ENCODE measurements at regions of chr9 and their contacts with region 1.

Region 1: DNA sequence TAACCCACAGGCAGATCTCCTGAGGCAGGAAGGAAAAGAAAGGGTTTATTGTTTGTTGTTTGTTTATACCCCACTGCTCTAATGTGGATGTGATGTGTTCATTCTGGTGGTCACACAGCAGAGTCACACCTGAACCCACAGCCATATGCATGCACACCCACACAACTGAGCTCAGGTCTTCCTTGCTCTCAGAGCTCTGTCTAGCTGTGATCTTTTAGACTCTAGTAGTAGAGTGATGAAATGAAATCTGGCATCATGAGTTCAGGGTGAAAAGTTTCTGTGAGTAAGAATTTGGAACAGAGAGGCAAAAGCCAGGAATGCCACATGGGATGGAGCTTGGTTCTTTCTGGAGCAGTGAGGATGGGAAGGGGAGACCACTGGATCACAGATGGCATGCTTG is 227.0 kb downstream of the PAPPA start:
- DNase-seq: no peak
- ATAC-seq: peak; percentile 41; the same call in 1 of the 3 replicates
- H3K4me3 ChIP-seq: no peak overlapping the region
- H3K27ac ChIP-seq: no peak overlapping the region
- H3K4me1 ChIP-seq: no peaks in the 10 kb centered on the region
- H3K27me3 ChIP-seq: no peaks in the 10 kb centered on the region
- CTCF ChIP-seq: no peak
- EP300 ChIP-seq: no peak
- POLR2A ChIP-seq: no peak
- RAD21 ChIP-seq: no peak

Region 2: DNA sequence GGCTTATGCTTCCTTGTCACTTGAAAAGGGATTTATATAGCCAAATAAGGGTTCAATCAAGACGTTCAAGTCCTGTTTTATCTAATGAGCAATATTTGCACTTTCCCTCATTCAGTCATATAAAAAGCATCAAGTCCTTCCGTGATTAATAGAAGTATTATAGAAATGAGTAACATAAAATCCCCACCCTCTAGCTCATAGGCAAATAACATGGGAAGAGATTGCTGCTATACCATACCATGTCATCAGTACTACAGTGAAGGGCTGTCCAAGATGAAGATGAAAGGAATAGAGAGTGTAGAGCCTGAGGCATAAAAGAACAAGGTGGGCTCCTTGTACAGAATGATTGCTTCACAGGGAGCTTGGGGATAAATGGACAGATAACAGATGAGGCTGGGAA is 247.4 kb before region 1 on chr9:
- CTCF ChIA-PET with region 1: no interaction called
- POLR2A ChIA-PET with region 1: no interaction called
- RAD21 ChIA-PET with region 1: no interaction called
- SMC1A ChIA-PET with region 1: no interaction called
- in situ Hi-C with region 1: no loop called
- intact Hi-C with region 1: no loop called
- DNase-seq: no peak
- ATAC-seq: peak; percentile 58
- H3K4me3 ChIP-seq: no peak overlapping the region
- H3K27ac ChIP-seq: no peak overlapping the region
- H3K4me1 ChIP-seq: no peaks in the 10 kb centered on the region
- H3K27me3 ChIP-seq: no peaks in the 10 kb centered on the region
- CTCF ChIP-seq: no peak
- EP300 ChIP-seq: no peak
- POLR2A ChIP-seq: no peak
- RAD21 ChIP-seq: no peak

Region 3: GRCh38 chr9:116450378-116451139 is 70.0 kb after region 1 on chr9:
- CTCF ChIA-PET with region 1: no interaction called
- POLR2A ChIA-PET with region 1: no interaction called
- RAD21 ChIA-PET with region 1: no interaction called
- SMC1A ChIA-PET with region 1: interaction called, 3 read pairs
- in situ Hi-C with region 1: no loop called
- intact Hi-C with region 1: loop called (anchors 2 kb)
- DNase-seq: peak; percentile 51
- ATAC-seq: peak; percentile 94
- H3K4me3 ChIP-seq: no peak overlapping the region
- H3K27ac ChIP-seq: no peak overlapping the region
- H3K4me1 ChIP-seq: peaks cover 9% of the 10 kb centered on the region
- H3K27me3 ChIP-seq: no peaks in the 10 kb centered on the region
- CTCF ChIP-seq: no peak
- EP300 ChIP-seq: 0 out of 4 replicates have a peak, but pooled peaks of 1 of the 2 experiments have one; percentile 24
- POLR2A ChIP-seq: no peak
- RAD21 ChIP-seq: no peak